IMR-90 (cell line): ENCODE measurements at regions of chr14 and their contacts with region 1.

Region 1: GRCh38 chr14:99524804-99525698 is 43.8 kb downstream of the CCNK start:
- DNase-seq: peak; percentile 59
- ATAC-seq: peak; percentile 54
- H3K4me3 ChIP-seq: no peak overlapping the region
- H3K27ac ChIP-seq: no peak overlapping the region
- H3K4me1 ChIP-seq: peaks cover 35% of the 10 kb centered on the region
- H3K27me3 ChIP-seq: no peaks in the 10 kb centered on the region
- CTCF ChIP-seq: peak; percentile 49
- POLR2A ChIP-seq: no peak
- RAD21 ChIP-seq: peak; percentile 60

Region 2: DNA sequence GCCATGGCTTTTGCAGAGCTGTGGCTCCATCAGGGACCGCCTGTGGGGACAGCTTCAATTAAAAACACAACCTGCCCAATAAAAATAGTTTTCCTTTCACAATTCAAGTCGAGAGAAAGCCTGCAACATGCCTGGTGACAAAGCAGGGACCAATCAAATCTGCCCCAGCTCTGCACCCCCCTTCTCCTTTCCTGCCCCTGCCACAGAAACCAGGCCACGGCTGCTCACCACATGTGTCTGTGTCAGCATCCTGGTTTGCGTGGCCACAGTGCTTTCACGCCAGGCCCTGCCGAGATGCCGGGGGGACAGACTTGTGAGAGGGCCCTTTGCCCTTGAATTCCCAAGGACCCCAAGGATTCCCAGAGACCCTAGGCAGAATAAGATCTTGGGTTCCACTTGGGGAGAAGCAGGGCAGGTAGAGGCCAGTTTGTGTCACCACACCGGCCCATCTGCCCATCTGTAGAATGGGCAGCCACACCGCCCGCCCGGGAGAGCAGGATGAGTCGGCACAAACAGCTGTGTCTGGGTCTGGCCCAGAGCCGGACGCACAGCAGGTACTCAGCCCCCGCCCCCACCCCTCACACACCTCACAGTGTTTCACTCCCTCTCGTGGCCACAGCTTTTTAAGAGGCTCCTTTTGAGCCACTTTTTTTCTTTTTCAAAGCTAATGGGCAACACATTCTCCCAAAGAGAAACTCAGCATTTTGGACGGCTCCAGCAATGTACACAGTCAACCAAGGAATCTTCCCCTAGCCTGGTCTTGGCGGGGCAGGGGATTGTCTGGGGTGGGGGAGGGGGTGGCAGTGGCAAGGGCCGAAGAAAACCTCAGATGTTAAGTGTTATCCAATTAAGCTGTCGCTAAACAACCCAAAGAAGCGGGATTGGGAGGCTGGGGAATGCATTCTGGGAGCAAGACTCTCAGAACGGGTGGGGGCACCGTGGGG is 294.6 kb before region 1 on chr14:
- CTCF ChIA-PET with region 1: no interaction called
- POLR2A ChIA-PET with region 1: no interaction called
- dilution Hi-C with region 1: no loop called
- in situ Hi-C with region 1: no loop called
- intact Hi-C with region 1: no loop called
- DNase-seq: no peak
- ATAC-seq: no peak
- H3K4me3 ChIP-seq: no peak overlapping the region
- H3K27ac ChIP-seq: no peak overlapping the region
- H3K4me1 ChIP-seq: no peaks in the 10 kb centered on the region
- H3K27me3 ChIP-seq: no peaks in the 10 kb centered on the region
- CTCF ChIP-seq: no peak
- POLR2A ChIP-seq: no peak
- RAD21 ChIP-seq: no peak

Region 3: GRCh38 chr14:99604283-99604765 is 79.3 kb after region 1 on chr14:
- CTCF ChIA-PET with region 1: interaction called, 3 read pairs
- POLR2A ChIA-PET with region 1: no interaction called
- dilution Hi-C with region 1: no loop called
- in situ Hi-C with region 1: no loop called
- intact Hi-C with region 1: loop called (anchors 1 kb)
- DNase-seq: peak; percentile 94
- ATAC-seq: peak; percentile 94
- H3K4me3 ChIP-seq: peak overlapping the region; percentile 63
- H3K27ac ChIP-seq: peak overlapping the region; percentile 83
- H3K4me1 ChIP-seq: peaks cover 16% of the 10 kb centered on the region
- H3K27me3 ChIP-seq: no peaks in the 10 kb centered on the region
- CTCF ChIP-seq: no peak
- POLR2A ChIP-seq: no peak
- RAD21 ChIP-seq: no peak

Region 4: DNA sequence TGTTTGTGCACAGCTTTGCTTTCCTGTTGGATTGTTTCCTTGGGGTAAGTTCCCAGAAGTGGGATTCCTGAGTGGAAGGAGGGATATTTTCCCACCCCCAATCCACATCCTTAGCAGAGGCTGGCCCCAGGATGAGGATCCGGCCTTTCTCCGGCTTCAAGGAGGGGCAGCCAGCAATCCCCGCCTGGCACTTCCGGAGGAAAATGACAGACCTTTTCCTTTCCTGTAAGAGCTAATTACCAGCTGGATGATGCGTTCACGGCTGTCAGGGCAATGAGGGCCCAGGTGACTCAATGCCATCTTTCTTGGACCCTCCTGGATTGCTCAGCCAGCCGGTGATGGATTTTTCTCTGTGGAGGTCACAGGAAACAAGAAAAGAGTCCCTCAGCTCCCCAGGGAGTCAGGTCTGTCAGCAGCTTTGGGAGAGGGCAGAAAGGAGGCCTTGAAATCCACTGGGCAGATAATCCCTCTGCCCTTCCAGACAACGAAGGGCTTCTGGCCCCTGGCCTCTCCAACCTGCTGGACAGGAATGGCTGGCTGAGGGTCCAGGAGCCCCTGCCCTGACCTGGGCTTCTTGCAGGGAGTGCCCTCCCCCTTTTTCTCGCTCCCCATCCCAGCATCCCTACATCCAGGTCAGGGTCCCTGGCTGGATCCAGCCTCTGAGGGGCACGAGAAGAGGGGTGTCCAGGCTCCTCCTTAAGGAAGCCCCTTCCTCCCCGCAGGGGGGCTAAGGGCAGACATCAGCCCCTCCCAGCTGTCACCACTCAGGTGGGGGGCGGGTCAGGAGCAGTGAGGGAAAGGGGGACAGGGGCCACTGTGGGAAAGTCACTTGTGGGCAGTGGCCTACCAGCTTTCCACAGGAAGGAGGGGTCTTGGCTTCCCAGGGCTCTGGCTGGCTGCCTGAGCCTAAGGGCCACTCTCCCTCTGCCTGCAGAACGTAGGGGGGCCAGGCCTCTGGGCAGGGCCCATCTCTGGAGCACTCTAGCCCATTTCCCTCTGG is 95.1 kb after region 1 on chr14:
- CTCF ChIA-PET with region 1: no interaction called
- POLR2A ChIA-PET with region 1: no interaction called
- dilution Hi-C with region 1: no loop called
- in situ Hi-C with region 1: loop called (anchors 5 kb)
- intact Hi-C with region 1: no loop called
- DNase-seq: peak; percentile 45
- ATAC-seq: no peak
- H3K4me3 ChIP-seq: no peak overlapping the region
- H3K27ac ChIP-seq: no peak overlapping the region
- H3K4me1 ChIP-seq: peaks cover 20% of the 10 kb centered on the region
- H3K27me3 ChIP-seq: no peaks in the 10 kb centered on the region
- CTCF ChIP-seq: no peak
- POLR2A ChIP-seq: no peak
- RAD21 ChIP-seq: no peak

Region 5: DNA sequence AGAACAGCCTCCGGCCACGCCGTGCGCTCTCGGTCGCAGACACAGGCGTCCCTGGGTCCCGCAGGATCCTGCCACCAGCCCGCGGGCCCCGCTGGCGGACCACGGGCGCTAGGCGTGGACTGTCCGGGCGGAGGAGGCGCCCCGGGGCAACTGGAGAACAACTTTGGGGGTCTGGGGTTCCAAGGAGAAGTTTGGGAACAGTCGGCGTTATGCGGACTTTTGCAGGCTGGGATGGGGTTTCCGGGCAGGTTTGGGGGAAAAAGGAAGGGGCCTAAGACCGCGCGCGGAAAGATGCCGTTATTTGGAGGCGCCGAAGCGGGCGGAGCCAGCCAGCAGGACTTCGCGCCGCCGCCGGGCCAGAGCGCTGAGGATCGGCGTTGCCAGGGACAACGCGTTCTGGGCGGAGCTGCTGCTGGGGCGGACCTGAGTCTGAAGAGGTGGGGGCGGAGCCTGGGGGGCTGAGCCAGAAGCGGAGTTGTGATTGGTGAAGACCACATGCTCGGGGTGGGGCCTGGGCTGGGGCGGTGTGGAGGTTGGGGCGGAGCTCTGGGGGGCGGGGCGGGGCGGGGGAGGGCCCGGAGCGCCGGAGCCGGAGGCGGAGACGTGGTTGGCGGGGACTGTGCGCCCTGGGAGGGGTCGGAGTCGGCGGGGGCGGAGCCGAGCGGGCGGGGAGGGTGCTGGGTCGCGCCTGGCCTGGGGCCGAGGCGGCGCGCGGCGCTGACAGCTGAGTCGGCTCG is 158.7 kb after region 1 on chr14 and contains the start of gene CYP46A1:
- CTCF ChIA-PET with region 1: no interaction called
- POLR2A ChIA-PET with region 1: no interaction called
- dilution Hi-C with region 1: no loop called
- in situ Hi-C with region 1: no loop called
- intact Hi-C with region 1: loop called (anchors 5 kb)
- DNase-seq: peak; percentile 99
- ATAC-seq: peak; percentile 97
- H3K4me3 ChIP-seq: peak within 1 kb of the TSS; percentile 88
- H3K27ac ChIP-seq: peak within 1 kb of the TSS; percentile 65
- H3K4me1 ChIP-seq: peaks cover 8% of the 10 kb centered on the region
- H3K27me3 ChIP-seq: peaks cover 29% of the 10 kb centered on the region
- CTCF ChIP-seq: no peak
- POLR2A ChIP-seq: no peak
- RAD21 ChIP-seq: no peak
- total RNA-seq, gene CYP46A1: under 0.01 and 0.18 TPM in 2 replicates

Region 6: GRCh38 chr14:99899578-99900178 is 374.6 kb after region 1 on chr14:
- CTCF ChIA-PET with region 1: no interaction called
- POLR2A ChIA-PET with region 1: no interaction called
- dilution Hi-C with region 1: no loop called
- in situ Hi-C with region 1: loop called (anchors 10 kb)
- intact Hi-C with region 1: no loop called
- DNase-seq: peak; percentile 47
- ATAC-seq: peak; percentile 62
- H3K4me3 ChIP-seq: no peak overlapping the region
- H3K27ac ChIP-seq: no peak overlapping the region
- H3K4me1 ChIP-seq: no peaks in the 10 kb centered on the region
- H3K27me3 ChIP-seq: no peaks in the 10 kb centered on the region
- CTCF ChIP-seq: peak; percentile 56
- POLR2A ChIP-seq: no peak
- RAD21 ChIP-seq: peak; percentile 39